Sciatic nerve (tissue), 2 donors: ENCODE measurements at regions of chr2 and their contacts with region 1.

Region 1: GRCh38 chr2:141560723-141561122 is 570.1 kb downstream of the LRP1B start:
- DNase-seq: no peak
- ATAC-seq: no peak

Region 2: DNA sequence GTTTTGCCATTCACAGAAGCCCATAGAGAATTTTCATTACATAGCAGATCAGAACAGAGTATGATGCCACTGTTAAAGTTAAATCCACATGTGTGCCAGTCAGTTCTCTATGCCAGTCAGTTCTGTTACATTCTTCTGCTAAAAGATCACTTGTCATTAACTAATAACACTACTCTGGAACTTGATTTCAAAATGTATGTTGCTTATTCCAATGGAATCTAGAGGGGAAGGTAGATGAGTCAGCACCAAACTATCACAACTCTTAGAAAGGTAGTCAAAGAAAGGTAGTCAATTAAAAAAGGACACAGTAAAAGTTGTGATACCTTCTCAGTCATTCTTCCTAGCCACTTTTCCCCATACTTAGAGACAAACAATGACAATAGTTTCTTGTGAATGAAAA is 644.3 kb before region 1 on chr2:
- intact Hi-C with region 1: loop called (anchors 5 kb)
- DNase-seq: no peak
- ATAC-seq: no peak